B cell (primary cell): ENCODE measurements at regions of chr18 and their contacts with region 1.

Region 1: GRCh38 chr18:56248610-56249235 is 389.7 kb downstream of the TXNL1 start:
- DNase-seq: peak; percentile 79
- ATAC-seq: peak; percentile 96
- H3K4me3 ChIP-seq: peak overlapping the region in 4 of 5 experiments; percentile 12 to 44 (median 14)
- H3K4me3 Mint-ChIP-seq: peak overlapping the region; percentile 60
- H3K27ac ChIP-seq: peak overlapping the region; percentile 56 to 77
- H3K27ac Mint-ChIP-seq: peak overlapping the region; percentile 82
- H3K4me1 ChIP-seq: peaks cover 35 to 52% of the 10 kb centered on the region in 2 donors
- H3K4me1 Mint-ChIP-seq: peaks cover 47% of the 10 kb centered on the region
- H3K27me3 ChIP-seq: no peaks in the 10 kb centered on the region
- H3K27me3 Mint-ChIP-seq: no peaks in the 10 kb centered on the region
- CTCF ChIP-seq: no peak

Region 2: DNA sequence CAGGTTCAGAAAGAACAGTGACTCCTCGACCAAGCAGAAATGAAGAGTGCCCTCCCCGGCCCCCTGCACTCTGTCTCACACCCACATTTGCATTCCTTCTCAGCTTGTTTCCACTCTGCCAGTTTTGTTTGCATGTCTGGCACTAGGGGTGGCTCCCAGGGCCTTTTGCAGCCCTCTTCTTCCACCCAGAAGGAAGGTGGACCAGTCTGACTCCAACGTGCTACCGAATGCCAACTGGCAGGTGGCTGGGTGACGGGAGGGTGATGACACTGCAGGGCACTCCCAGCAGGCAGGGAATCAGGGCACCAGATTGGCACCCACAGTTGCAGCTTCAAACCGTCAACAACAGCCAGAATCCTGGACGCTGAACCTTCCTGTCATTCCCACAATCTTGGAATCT is 18.6 kb after region 1 on chr18:
- CTCF ChIA-PET with region 1: no interaction called
- POLR2A ChIA-PET with region 1: no interaction called
- intact Hi-C with region 1: loop called (anchors 2 kb)
- DNase-seq: peak; percentile 58
- ATAC-seq: peak; percentile 89
- H3K4me3 ChIP-seq: peak overlapping the region in 3 of 5 experiments; percentile 2 to 15 (median 4)
- H3K4me3 Mint-ChIP-seq: peak overlapping the region; percentile 82
- H3K27ac ChIP-seq: peak overlapping the region in 1 of 2 donors; percentile 27
- H3K27ac Mint-ChIP-seq: peak overlapping the region; percentile 79
- H3K4me1 ChIP-seq: peaks cover 32 to 36% of the 10 kb centered on the region in 2 donors
- H3K4me1 Mint-ChIP-seq: peaks cover 39% of the 10 kb centered on the region
- H3K27me3 ChIP-seq: no peaks in the 10 kb centered on the region
- H3K27me3 Mint-ChIP-seq: no peaks in the 10 kb centered on the region
- CTCF ChIP-seq: no peak